ENCODE measurements at regions of chr3 and their contacts with region 1.

Region 1: DNA sequence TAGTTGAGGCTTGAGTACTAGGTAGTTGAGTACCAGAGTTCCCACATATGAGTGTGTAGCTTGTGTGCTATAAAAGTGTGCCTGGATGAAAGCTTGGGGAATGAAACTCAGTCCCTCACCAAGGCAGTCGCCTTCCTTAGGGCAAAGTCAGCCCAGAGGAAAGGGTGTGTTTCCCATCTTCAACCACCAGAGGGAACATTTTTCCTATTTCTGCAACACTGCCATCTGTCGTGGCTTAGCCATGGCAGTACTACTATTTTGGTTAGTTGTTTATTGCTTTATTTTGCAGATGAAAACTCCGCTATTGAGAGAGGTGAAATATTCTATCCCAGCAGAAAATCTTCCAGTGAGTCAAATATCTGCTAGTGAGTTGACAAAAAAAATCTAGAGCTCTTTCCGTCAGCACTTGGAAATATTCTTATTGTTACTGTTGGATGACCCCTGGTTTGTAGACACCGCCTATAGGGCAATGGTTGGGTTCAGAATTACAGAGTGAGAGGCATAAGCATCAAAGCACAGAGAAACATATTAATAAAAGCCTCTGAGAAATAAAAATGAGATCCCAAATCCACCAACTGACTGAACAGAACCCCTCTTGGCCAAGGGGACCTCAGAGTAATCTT is 239.9 kb downstream of the CPNE4 start:
- DNase-seq: peak; percentile 36
- H3K4me3 ChIP-seq: no peak overlapping the region
- H3K27ac ChIP-seq: no peak overlapping the region
- H3K27me3 ChIP-seq: peaks cover 2% of the 10 kb centered on the region
- CTCF ChIP-seq: peak; percentile 93

Region 2: DNA sequence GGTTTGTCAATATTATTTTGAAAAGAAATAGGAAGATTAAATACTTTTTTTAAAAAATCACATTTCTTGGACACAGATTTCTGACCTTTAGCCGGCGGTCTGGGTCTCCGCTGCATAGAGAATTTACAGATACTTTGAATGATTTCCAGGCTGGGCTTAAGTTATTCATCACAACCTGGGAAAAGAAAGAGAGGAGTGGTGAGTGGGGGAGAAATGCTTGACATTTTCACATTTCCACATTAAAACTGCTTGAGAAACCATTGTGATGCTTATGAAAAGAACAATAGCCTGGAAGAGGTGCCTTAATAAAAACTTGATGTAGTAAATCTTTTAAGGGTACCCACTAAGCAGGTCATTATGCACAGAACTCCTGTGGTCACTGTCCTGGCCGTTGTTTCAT is 125.3 kb before region 1 on chr3:
- CTCF ChIA-PET with region 1: no interaction called
- POLR2A ChIA-PET with region 1: no interaction called
- DNase-seq: no peak
- H3K4me3 ChIP-seq: no peak overlapping the region
- H3K27ac ChIP-seq: no peak overlapping the region
- H3K27me3 ChIP-seq: no peaks in the 10 kb centered on the region
- CTCF ChIP-seq: no peak

Region 3: DNA sequence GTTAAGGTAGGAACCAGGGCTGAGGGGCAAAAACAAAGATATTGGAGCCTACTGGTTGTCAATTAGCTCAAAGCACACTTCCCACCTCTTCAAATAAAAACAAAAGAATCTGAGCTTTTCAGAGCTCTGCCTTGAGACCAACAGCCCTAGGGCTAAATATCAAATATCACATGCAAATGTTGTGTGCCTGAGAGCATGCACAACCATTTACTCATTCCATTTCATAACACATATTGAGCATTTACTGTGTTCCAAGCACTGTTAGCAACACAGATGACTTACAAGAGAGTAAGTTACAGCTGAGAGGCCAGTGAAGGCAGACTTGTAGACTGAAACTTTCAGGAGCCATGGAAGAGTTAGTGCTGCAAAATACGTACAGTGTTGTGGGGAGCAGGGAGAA is 17.5 kb after region 1 on chr3:
- CTCF ChIA-PET with region 1: interaction called, 24 read pairs
- POLR2A ChIA-PET with region 1: no interaction called
- DNase-seq: no peak
- H3K4me3 ChIP-seq: no peak overlapping the region
- H3K27ac ChIP-seq: no peak overlapping the region
- H3K27me3 ChIP-seq: no peaks in the 10 kb centered on the region
- CTCF ChIP-seq: no peak

Region 4: GRCh38 chr3:132006605-132007204 is 211.8 kb after region 1 on chr3:
- CTCF ChIA-PET with region 1: interaction called, 14 read pairs
- POLR2A ChIA-PET with region 1: no interaction called
- DNase-seq: no peak
- H3K4me3 ChIP-seq: no peak overlapping the region
- H3K27ac ChIP-seq: no peak overlapping the region
- H3K27me3 ChIP-seq: peaks cover 2% of the 10 kb centered on the region
- CTCF ChIP-seq: peak; percentile 62

Region 5: DNA sequence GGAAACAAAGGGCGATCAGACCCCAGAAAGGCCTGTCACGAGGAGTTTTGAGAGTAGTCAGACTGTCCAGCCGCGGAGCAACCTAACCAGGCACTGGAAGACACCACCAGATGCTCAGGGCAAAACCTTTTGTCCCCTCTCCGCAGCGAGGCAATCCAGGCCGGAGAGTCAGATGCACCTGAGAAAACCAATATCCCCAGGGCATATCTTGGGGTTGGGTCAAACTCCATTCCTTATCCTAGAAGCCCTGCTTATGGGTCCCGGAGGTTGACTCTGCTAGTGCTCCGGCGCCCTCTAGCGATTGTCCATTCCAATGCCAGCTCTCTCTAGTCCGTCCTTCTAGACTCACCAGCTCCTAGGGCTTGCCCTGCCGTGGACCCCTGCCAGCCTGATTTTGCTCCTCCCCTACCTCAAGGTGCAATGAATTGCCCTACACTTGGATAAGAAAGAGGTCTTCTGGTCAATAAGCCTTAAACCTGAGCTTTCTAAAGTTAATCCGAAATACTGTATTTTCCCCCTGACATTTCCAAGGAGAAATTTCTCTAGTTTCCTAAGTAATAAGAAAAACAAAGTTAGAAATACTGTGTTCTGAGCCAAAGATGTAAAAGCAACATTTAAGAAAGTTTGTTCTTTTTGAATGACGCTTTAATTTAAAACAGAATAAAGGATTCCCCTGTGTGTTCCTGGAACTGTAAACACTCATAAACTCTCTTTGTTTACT is 234.5 kb after region 1 on chr3:
- CTCF ChIA-PET with region 1: interaction called, 264 read pairs
- POLR2A ChIA-PET with region 1: no interaction called
- DNase-seq: peak; percentile 52
- H3K4me3 ChIP-seq: no peak overlapping the region
- H3K27ac ChIP-seq: no peak overlapping the region
- H3K27me3 ChIP-seq: peaks cover 13% of the 10 kb centered on the region
- CTCF ChIP-seq: peak; percentile 97

Region 6: GRCh38 chr3:132399054-132399929 is 604.4 kb after region 1 on chr3:
- CTCF ChIA-PET with region 1: interaction called, 12 read pairs
- POLR2A ChIA-PET with region 1: no interaction called
- DNase-seq: peak; percentile 42
- H3K4me3 ChIP-seq: no peak overlapping the region
- H3K27ac ChIP-seq: no peak overlapping the region
- H3K27me3 ChIP-seq: no peaks in the 10 kb centered on the region
- CTCF ChIP-seq: peak; percentile 90

Measured in AG04450 (cell line).